Right ventricle myocardium inferior (tissue), 1 donor: ENCODE measurements at regions of chr2 and their contacts with region 1.

Region 1: DNA sequence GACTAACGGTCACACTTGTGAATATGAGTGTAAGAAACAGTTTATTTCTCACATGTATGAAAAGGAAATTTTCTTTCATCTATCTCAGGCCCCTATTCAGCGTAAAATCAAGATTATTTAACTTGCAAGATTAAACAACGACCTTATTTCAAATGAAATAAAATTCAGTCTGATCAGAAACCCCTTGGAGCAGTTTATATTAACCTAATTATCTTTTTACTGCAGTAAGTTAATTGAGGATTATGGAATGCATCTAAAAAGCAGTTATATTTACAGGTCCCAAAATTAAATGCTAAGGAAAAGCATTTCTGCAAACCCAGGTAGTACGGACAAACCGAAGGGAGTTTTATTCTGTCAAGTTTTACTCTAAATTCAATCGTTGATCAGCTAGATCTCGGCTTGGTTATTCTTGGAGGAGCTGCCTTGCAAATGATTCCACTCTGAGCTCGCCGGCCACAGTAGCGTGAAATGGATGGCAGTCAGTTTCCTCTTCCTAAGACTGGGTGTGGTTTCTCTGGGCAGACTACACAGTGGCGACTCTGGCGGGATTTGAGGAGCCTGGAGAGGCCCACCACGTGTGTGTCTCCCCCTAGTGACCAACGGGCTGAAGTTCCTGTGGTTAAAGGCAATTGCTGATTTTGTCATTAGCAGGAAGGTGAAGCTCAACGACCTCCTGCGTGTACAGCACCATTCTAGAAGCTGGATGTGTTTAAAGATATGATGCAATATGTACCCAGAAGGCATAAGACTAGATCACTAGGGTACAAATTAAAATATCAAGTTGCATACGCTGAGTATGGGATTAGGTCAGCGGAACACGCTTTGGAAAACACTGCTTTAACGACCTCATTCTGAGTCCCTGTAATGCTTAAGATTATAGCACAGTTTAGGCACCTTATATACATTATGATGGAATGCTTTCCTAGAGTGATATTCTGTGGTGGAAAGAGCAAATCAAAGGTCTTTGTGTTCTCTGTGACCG is 36.4 kb downstream of the PRKRA start:
- DNase-seq: peak; percentile 91
- ATAC-seq: peak; percentile 99

Region 2: DNA sequence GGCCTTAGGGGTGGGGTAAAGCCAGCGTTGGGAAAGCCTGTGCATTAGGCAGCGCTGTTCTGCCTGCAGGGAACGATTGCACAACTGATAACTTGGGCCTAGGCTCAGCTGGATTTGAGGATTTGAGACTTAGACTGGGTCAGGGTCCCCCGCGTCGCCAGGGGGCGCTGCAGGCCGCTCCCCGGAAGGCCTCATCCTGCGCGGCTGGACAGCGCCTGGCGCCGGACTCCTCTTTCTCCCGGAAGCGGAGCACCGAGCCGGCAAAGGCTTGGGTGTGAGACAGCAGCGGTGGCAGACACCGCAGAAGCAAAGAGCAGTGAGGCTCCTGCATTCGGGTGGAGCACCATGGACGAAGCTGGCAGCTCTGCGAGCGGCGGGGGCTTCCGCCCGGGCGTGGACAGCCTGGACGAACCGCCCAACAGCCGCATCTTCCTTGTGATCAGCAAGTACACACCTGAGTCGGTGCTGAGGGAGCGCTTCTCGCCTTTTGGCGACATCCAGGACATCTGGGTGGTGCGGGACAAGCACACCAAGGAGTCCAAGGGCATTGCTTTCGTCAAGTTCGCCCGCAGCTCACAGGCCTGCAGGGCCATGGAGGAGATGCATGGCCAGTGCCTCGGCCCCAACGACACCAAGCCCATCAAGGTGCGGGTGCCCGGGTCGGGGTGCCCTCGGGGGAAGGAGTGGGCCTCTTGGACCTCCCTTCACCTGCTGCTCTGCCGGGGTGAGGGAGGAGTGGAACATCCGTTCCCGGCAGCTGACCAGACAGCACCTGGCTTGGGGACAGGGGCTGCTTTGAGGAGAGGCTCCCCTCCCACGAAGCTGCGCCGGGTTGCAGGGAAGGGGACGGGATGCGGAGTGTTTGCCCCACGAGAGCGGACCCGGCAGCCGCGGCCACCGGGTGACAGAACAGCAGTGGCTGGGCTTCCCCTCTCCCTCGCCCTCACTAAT is 302.1 kb before region 1 on chr2 and contains the start of gene RBM45:
- intact Hi-C with region 1: loop called (anchors 5 kb)
- DNase-seq: peak; percentile 96
- ATAC-seq: peak; percentile 98
- total RNA-seq, gene RBM45: 5.6 TPM

Region 3: DNA sequence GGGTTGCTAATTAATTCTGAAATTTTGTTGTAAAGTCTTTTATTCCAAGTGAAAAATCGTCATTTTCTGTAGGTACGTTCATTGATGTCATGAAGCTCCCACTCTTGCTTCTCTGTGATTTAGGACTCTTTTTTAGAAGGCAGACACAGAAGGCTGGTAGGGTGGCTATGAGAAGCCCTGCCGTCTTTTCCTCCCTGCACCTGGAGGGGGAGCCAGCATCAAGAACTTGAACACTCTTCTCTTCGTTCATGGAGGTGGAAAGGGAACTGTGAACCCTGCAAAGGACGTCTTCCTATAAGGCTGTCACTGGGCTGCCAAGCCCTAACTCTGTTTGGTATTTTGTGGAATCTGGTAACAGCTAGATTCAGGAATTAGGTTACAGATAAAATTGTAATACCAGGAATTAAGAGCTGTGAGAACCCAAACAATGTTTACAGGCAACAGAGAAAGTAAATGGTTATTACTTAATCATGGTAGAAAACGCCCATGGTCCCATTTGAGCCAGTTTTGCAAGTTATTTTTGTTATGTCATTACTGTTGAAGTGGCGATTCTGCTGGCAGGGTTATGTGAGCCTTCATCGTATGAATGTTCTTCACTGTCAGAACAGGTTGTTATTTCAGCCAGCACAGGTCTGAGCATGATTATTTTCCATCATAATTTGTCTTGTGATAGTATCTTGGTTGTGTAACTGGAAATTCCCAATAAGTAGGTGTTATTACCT is 108.0 kb before region 1 on chr2:
- intact Hi-C with region 1: loop called (anchors 5 kb)
- DNase-seq: no peak
- ATAC-seq: peak; percentile 56

Region 4: GRCh38 chr2:178397002-178397605 is 17.5 kb before region 1 on chr2:
- intact Hi-C with region 1: loop called (anchors 2 kb)
- DNase-seq: no peak
- ATAC-seq: peak; percentile 57

Region 5: DNA sequence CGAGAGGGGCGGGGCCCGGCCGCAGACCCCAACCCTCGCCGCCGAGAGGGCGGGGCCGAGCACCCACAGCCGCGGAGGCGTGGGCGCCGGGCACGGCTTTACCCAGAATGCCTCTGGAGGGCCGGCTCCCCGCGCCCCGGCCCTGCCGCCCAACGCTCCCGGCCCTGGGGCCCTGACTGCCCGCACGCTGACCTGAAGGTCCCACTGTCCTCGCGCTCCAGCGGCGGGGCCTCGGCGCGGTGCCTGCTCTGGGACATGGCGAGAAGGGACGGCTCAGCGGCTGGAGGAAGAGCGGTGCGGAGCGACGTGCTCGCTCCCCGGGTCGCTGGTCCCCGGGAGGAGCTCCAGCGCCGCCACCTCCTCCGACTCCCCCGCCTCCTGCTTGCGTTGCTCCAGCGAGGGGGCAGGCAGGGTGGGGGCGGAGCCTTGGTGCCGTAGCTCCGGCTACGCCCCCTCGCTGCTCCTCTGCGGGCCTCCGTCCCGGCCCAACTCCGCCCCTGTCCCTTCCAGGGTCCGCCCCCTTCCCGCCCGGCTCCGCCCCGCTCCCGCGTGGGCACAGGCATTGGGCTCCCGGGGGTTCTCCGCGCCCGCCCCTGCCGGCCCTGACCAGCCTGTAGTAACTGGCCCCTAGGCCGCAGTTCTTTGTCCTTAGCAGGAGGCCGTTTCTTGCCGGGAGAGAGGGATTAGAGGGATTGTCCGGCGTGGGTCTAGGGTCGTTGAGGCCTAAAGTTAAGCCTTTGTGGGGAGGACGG is 36.4 kb after region 1 on chr2 and contains the starts of genes PJVK and PRKRA:
- intact Hi-C with region 1: loop called (anchors 2 kb)
- DNase-seq: peak; percentile 99
- ATAC-seq: peak; percentile 99
- total RNA-seq, gene PJVK: 0.70 TPM
- total RNA-seq, gene PRKRA: 45.4 TPM

Region 6: GRCh38 chr2:178478439-178479274 is 64.1 kb after region 1 on chr2 and contains the start of gene FKBP7:
- intact Hi-C with region 1: loop called (anchors 1 kb)
- DNase-seq: peak; percentile 96
- ATAC-seq: peak; percentile 86
- total RNA-seq, gene FKBP7: 9.3 TPM

Region 7: DNA sequence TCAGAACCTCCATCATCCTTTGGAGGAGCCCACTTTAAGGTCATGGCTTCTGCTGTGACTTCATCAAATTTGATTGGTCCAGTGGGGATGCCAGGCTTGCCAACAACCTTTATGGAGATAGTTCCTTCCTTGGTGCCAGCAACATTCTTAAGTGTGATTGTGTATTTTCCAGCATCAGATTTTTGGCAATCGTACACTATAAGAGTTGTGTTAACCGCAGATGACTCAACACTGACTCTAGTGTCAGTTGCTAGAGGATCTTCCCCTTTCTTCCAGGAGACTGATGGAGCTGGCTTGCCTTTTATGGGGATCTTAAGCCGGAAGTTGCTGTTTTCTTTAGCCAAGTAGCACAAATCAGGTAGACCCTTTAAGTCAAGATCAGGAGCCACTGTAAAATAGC is 164.4 kb after region 1 on chr2:
- intact Hi-C with region 1: no loop called
- DNase-seq: no peak
- ATAC-seq: peak; percentile 4

Region 8: GRCh38 chr2:178628605-178629004 is 214.0 kb after region 1 on chr2:
- intact Hi-C with region 1: no loop called
- DNase-seq: no peak
- ATAC-seq: peak; percentile 75

Region 9: DNA sequence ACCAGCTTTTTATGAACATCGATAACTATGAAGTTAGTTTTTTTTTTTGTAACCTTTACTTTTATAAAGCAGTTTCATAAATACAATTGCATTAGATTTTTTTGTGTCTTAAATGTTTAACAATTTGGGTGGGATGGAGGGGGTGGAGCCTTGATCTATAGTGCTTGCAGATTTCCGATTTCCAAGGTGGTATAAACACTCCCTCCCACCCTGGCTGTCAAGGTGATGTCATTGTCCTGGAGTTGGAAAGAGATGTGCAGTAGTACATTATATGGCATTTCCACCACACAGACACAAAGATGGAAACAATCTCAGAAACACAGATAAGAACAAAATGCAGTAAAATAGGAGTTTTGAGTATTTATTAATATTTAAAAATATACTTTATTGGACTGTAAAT is 278.3 kb after region 1 on chr2:
- intact Hi-C with region 1: no loop called
- DNase-seq: no peak
- ATAC-seq: no peak